ENCODE measurements at regions of chr2 and their contacts with region 1.

Region 1: GRCh38 chr2:218269899-218270720 is at the starts of genes AAMP and PNKD:
- DNase-seq: peak; percentile 100
- total RNA-seq, gene AAMP: 56.3 TPM
- total RNA-seq, gene PNKD: 72.6 TPM

Region 2: DNA sequence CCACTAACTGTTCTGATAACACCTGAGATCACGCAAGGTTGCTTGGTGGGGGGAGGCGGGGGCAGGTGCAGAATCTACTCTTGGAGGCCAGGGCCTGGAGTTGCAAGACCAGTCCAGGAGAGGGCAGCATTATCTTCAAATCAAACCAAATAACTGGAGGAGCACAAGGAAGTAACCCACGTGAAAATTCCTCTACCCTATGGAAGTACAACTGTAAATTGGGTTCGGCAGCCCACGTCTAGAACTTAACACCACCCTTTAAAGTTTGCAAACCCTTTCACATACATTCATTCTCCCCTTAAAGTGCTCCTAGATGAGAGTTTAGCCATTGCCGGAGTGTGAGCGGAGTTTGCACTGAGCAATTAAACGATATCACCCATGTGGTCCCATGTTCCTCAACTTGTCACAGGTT is 83.7 kb before region 1 on chr2:
- intact Hi-C with region 1: loop called (anchors 5 kb)
- DNase-seq: peak; percentile 85

Region 3: GRCh38 chr2:218216674-218217359 is 53.3 kb before region 1 on chr2 and contains the start of gene ARPC2:
- intact Hi-C with region 1: loop called (anchors 1 kb)
- DNase-seq: peak; percentile 99
- total RNA-seq, gene ARPC2: 172 TPM

Region 4: DNA sequence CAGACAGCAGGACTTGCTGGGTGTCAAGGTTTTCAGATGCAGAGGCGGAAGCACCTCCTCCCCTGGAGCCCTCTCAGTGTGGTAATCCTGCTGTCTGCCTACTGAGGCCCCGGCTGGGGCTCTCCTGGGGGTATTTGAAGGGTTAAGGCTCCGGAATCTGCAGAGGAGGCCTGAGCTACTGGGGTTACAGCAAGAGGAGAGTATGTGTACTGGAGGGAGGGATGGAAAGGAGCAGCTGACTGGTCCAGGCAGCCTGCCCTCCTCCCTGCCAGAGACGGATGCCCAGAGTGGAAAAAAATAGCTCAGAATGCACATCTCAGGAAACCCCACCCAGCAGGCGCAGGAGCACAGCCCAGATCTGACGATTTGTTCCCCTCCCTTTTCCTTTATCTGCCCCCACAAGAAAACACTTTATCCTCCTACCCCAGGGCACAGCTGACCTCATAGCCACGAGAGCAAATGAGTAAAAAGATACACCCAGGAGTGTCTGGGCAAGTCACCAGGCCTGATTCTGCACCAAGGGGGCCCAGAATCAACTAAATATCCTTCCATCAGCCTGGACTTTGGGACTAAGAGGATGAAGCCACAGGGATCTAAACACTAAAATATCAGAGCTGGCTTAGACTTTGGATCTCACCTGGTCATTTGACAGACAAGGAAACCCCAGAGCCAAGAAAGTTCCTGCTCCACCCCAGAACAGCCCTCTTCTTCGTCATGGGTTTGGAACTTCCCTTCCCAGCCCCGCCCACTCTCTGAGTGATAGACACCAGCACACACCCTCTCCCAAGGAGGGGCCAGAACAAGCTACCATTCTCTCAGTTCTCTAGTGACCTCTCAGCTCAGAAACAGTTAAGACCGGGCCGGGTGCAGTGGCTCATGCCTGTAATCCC is 16.7 kb after region 1 on chr2:
- intact Hi-C with region 1: loop called (anchors 2 kb)
- DNase-seq: peak; percentile 94

Region 5: DNA sequence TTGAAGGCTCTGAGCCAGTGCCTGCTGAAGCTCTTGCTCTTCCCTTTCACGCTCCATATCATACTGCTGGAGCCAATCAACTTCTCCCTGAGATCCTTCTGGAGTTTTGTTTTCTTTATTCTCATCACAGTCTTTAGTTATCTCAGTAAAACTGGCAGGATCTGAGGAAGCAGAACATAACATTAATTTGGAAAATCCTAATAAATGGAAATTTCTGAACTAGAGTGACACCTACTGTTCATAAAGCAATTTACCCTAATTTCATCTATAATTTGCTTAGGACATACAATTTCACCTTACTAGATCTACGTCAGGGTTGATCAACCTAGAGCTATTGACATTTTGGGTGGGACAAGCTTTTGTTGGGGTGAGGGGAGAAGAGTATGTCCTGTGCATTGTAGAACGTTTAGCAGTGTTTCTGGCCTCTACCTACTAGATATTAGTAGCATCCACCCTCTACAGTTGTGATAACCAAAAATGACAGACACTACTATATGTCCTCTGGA is 196.0 kb after region 1 on chr2:
- intact Hi-C with region 1: loop called (anchors 10 kb)
- DNase-seq: no peak

Region 6: DNA sequence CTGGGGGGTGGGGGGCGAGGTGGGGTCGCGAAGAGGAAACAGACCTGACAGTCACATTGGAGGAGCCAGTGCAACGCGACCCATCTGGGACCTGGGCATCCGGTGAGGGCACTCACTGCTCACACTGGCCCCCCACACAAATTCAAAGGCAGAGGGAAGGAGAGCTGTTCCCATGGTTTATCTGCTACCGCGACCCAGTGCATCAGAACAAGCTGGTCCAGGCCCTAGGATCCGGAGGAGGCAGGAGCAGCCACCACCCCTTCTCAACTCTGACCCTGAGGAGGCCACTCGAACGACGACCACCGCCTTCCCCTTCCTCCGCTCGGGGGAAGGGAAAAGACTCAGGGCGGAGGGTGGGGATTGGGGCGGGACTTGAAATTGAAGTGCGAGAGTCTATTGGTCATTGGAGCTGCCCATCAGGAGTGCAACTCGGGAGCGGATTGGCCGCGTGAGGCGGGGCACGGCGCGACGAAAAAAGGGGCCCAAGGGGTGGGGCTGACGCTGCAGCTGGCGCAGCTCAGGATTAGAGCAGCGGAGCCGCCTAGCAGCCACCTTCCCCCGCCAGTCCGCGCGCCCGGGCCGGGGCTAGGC is 689.1 kb after region 1 on chr2 and contains the start of gene CDK5R2:
- intact Hi-C with region 1: no loop called
- DNase-seq: peak; percentile 81
- total RNA-seq, gene CDK5R2: not detected

Measured in cardiac septum (tissue), 1 donor.